Activated CD8-positive, alpha-beta memory T cell treated with anti-CD3 and anti-CD28 coated beads, Interleukin-2, amount 10 ng/mL, durations not matched to agents 7 days and 5 days (primary cell): ENCODE measurements at regions of chr1 and their contacts with region 1.

Region 1: DNA sequence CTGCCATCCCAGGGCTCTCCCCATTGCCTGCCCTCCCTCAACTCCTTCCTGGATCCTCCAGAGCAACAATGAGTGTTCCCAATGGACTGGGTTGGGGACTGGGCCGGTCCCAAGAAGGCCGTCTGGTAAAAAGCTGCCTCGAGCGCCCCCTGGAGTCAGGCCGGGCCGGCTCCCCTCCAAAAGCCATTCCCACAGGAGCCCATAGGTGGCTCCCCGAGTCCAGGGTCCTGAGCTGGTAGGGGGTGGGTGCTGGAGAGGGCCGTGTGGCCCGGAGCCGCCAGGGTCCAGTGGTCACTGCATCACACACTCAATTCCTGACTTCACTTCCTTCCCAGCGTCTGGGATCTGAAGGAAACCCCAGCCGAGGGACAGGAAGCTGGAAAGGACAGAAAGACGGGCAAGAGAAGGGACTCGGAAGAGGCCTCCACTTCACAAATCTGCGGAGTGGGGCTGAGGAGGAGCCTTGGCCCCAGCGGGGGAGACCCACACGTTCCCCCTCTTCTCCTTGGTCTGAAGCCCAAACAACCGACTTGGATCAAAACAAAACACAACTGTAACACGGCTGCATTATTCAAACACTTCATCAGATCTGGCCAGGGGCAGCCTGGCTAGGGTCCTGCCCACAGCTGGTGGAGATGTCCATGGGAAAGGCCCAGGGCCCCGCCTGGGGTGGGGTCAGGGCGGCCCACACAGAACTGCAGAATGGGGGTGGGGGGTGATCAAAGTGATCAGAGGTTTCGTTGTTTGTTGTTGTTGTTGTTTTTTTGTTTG is 10.9 kb upstream of the ALDH4A1 start:
- DNase-seq: peak; percentile 75
- ATAC-seq: peak; percentile 89
- H3K4me3 Mint-ChIP-seq: no peak overlapping the region
- H3K27ac Mint-ChIP-seq: no peak overlapping the region
- H3K4me1 Mint-ChIP-seq: peaks cover 4% of the 10 kb centered on the region
- H3K27me3 Mint-ChIP-seq: no peaks in the 10 kb centered on the region

Region 2: DNA sequence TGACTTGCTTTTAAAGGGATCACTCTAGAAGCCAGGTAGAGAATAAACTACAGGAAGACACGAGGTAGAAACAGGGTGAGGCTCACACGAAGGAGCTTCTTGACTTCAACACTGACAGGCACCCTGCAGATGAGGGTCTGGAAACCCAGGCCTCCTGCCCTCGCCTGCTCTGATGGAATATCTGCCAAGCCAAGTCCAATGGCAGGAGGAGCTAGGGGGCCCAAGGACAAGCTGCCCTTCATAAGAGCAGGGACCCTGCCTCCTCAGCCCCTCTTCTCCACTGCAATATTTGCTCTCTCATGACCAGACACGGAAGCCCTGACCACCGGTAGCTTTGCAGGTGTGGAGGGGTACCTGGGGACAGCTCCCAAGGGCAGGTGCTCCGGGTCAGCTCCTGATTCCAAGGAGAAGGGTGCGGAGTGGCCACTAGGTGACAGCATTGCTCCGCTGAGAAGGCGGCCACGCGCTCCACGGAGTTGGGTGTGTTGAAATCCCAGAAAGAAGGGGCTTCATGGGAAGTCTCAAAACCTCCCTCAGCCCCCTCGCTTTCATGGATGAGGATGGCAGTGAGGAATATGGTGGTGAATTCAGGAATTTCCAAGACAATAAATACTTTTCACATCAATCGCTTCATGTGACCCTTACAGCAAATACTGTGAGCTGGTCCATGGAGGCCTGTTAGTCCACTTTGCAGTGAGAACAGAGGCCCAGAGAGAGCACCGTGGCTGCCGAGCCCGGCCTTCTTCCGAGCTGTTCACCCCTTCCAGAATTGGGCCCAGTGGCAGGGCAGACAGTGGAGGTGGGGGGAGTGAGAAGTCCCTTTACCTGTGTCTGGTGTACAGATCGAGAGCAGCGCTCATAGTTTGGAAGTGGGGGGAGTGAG is 315.8 kb before region 1 on chr1:
- CTCF ChIA-PET with region 1: no interaction called
- DNase-seq: peak; percentile 56
- ATAC-seq: peak; percentile 64
- H3K4me3 Mint-ChIP-seq: no peak overlapping the region
- H3K27ac Mint-ChIP-seq: no peak overlapping the region
- H3K4me1 Mint-ChIP-seq: no peaks in the 10 kb centered on the region
- H3K27me3 Mint-ChIP-seq: peaks cover 30% of the 10 kb centered on the region

Region 3: DNA sequence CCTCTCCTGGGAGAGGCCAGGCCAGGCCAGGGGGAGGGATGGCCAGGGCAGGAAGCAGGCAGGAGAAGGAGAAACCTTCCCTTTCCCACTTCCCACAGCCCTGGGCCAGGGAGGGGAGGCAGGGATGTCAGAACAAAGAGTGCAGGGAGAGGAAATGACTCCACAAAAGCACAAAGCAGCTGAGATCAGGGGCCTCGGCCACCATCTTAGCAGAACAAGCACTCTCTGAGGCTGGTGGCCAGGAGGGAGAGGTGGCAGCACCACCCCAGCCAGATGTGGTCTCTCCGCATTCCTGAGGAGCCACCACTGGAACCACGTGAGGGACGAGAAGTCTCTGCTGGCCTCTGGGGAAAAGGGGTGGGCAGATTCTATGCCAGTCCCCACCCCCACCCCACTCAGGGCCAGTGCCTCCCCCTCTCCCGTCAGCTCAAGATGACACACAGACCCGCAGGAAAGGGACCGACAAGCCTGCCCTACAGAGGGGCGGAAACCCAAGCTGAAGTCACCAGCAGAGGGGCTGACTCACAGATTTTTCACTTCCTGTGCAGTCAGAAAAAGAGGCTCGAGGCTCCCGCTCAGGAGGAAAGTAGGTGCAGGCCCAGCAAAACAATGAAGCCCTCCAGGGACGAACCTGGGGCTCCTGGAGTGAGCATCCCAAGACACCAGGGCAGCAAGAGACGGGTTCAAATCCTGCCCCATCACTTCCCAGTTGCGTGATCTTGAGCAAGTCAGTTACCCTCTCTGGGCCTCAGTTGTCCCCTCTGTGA is 13.2 kb after region 1 on chr1:
- CTCF ChIA-PET with region 1: interaction called, 38 read pairs
- DNase-seq: peak; percentile 96
- ATAC-seq: peak; percentile 89
- H3K4me3 Mint-ChIP-seq: peak overlapping the region; percentile 77
- H3K27ac Mint-ChIP-seq: peak overlapping the region; percentile 99
- H3K4me1 Mint-ChIP-seq: peaks cover 66% of the 10 kb centered on the region
- H3K27me3 Mint-ChIP-seq: no peaks in the 10 kb centered on the region

Region 4: DNA sequence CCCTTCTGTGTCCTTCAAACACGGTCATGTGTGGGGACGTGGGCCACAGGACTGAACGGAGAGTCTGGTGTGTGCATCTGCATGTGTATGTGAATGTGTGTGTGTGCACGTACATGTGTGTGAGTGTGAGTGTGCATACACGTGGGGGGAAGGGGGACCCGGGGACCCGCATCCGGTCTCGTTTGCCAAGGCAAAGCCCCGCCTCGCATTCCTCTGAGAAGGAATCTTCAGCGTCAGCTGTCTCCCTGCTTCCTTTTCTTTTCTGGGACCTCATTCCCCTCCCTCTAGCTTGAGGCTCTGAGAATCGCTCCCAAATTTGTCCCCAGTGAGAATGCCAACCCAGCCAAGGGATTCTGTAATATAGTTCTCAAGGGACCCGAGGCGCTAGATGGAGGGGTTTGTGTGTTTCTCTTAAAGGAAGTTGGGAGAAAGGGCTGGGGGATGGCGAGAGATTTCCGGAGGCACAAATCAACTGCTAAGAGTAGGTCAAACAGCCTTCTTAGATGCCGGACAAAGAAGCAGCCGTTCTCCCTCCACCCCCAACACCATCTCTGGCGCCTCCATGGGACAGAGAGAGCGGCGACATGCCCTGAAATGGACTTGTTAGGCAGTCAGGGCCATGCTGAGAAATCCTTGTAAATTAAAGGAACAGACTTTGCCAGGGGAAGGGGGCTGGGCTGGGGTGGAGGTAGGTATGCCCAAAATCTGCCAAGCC is 36.6 kb after region 1 on chr1:
- CTCF ChIA-PET with region 1: interaction called, 36 read pairs
- DNase-seq: no peak
- ATAC-seq: no peak
- H3K4me3 Mint-ChIP-seq: peak overlapping the region; percentile 47
- H3K27ac Mint-ChIP-seq: peak overlapping the region; percentile 94
- H3K4me1 Mint-ChIP-seq: peaks cover 86% of the 10 kb centered on the region
- H3K27me3 Mint-ChIP-seq: peaks cover 17% of the 10 kb centered on the region

Region 5: GRCh38 chr1:18967066-18967690 is 53.9 kb after region 1 on chr1:
- CTCF ChIA-PET with region 1: interaction called, 24 read pairs
- DNase-seq: no peak
- ATAC-seq: no peak
- H3K4me3 Mint-ChIP-seq: no peak overlapping the region
- H3K27ac Mint-ChIP-seq: no peak overlapping the region
- H3K4me1 Mint-ChIP-seq: peaks cover 5% of the 10 kb centered on the region
- H3K27me3 Mint-ChIP-seq: peaks cover 22% of the 10 kb centered on the region

Region 6: GRCh38 chr1:19021845-19022244 is 108.6 kb after region 1 on chr1:
- CTCF ChIA-PET with region 1: no interaction called
- DNase-seq: no peak
- ATAC-seq: no peak
- H3K4me3 Mint-ChIP-seq: no peak overlapping the region
- H3K27ac Mint-ChIP-seq: no peak overlapping the region
- H3K4me1 Mint-ChIP-seq: no peaks in the 10 kb centered on the region
- H3K27me3 Mint-ChIP-seq: peaks cover 18% of the 10 kb centered on the region

Region 7: DNA sequence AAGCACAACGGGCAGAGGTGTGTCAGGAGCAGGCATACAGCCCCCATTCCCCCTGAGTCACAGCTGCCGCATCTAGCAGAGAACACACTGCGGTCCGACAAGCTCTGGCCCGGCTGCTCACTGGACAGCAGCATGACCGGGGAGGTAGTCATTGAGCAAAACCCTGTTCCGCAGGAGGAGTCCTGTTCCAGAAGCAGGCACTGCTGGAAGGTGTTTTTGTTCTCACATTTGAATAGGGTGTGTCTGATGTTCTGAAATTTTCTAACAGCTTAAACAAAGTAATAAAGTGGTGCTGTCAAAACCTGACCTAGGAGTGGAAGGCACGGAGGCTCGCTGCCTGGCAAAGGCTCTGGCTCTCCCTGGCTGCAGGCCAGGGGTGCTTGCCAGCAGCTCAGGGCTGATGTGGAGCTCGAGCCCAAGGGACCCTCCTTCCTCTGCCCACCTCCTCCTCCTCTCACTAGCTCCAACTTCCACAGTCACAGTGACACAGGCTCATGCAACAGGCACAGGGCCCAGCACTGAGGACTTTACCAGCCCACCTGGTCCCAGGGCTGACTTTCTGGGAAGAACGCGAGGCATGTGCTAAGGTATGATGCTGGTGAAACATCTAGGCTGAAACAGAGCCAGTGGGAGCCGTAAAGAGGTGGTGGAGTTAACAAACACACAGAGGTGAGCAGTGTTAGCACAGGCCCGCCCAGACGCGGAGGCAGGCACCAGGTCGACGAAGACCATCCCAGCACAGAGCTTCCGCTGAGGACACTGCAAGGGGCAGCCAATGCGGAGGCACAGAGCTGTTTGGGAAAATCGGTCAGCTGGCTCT is 161.9 kb after region 1 on chr1:
- CTCF ChIA-PET with region 1: interaction called, 39 read pairs
- DNase-seq: no peak
- ATAC-seq: peak; percentile 34
- H3K4me3 Mint-ChIP-seq: no peak overlapping the region
- H3K27ac Mint-ChIP-seq: peak overlapping the region; percentile 70
- H3K4me1 Mint-ChIP-seq: peaks cover 31% of the 10 kb centered on the region
- H3K27me3 Mint-ChIP-seq: no peaks in the 10 kb centered on the region